ENCODE measurements at regions of chr14 and their contacts with region 1.

Region 1: GRCh38 chr14:29548948-29549370 is 378.7 kb downstream of the PRKD1 start:
- DNase-seq: peak; percentile 24
- ATAC-seq: peak; percentile 80
- H3K4me3 ChIP-seq: no peak overlapping the region
- H3K27ac ChIP-seq: no peak overlapping the region
- H3K4me1 ChIP-seq: no peaks in the 10 kb centered on the region
- H3K27me3 ChIP-seq: no peaks in the 10 kb centered on the region
- CTCF ChIP-seq: peak; percentile 57; the same call in 1 of the 2 replicates

Region 2: DNA sequence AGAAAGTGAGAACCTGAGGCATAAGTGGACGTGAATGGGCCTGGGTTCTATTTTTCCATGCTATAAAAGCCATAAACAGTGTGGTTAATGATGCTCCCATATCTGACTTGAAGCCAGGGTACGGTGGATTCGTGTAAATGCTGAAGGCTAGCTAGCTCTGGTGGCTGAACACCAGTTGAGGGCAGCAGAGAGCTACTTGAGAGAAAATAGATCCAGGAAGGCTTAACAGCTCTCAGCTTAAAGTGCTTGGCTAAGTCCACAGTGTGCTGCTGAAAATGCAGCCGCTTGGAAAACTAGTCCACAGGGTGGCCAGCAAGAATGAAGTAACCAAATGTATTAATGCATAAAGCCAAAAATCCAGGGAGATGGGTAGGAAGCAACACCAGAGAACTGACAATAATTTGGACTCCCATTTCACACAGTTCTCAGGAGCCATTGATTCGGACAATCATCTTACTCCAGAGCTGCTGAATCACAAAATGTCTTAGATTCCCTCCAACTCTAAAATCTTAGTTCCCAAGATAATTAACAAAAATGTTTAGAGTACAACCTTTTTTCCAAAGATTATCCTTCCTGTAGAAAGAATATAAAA is 797.4 kb before region 1 on chr14:
- CTCF ChIA-PET with region 1: no interaction called
- POLR2A ChIA-PET with region 1: no interaction called
- in situ Hi-C with region 1: loop called (anchors 25 kb)
- intact Hi-C with region 1: no loop called
- DNase-seq: peak; percentile 43
- ATAC-seq: peak; percentile 86
- H3K4me3 ChIP-seq: no peak overlapping the region
- H3K27ac ChIP-seq: no peak overlapping the region
- H3K4me1 ChIP-seq: no peaks in the 10 kb centered on the region
- H3K27me3 ChIP-seq: peaks cover 5% of the 10 kb centered on the region
- CTCF ChIP-seq: peak; percentile 80

Region 3: GRCh38 chr14:29376237-29376636 is 172.7 kb before region 1 on chr14:
- CTCF ChIA-PET with region 1: no interaction called
- POLR2A ChIA-PET with region 1: no interaction called
- in situ Hi-C with region 1: no loop called
- intact Hi-C with region 1: no loop called
- DNase-seq: no peak
- ATAC-seq: no peak
- H3K4me3 ChIP-seq: no peak overlapping the region
- H3K27ac ChIP-seq: no peak overlapping the region
- H3K4me1 ChIP-seq: no peaks in the 10 kb centered on the region
- H3K27me3 ChIP-seq: no peaks in the 10 kb centered on the region
- CTCF ChIP-seq: no peak

Region 4: GRCh38 chr14:29716150-29716549 is 167.2 kb after region 1 on chr14:
- CTCF ChIA-PET with region 1: no interaction called
- POLR2A ChIA-PET with region 1: interaction called, 13 read pairs
- in situ Hi-C with region 1: no loop called
- intact Hi-C with region 1: no loop called
- DNase-seq: no peak
- ATAC-seq: no peak
- H3K4me3 ChIP-seq: no peak overlapping the region
- H3K27ac ChIP-seq: no peak overlapping the region
- H3K4me1 ChIP-seq: no peaks in the 10 kb centered on the region
- H3K27me3 ChIP-seq: no peaks in the 10 kb centered on the region
- CTCF ChIP-seq: no peak

Region 5: GRCh38 chr14:30005114-30005808 is 456.3 kb after region 1 on chr14:
- CTCF ChIA-PET with region 1: interaction called, 3 read pairs
- POLR2A ChIA-PET with region 1: no interaction called
- in situ Hi-C with region 1: no loop called
- intact Hi-C with region 1: loop called (anchors 1 kb)
- DNase-seq: peak; percentile 15
- ATAC-seq: no peak
- H3K4me3 ChIP-seq: no peak overlapping the region
- H3K27ac ChIP-seq: no peak overlapping the region
- H3K4me1 ChIP-seq: no peaks in the 10 kb centered on the region
- H3K27me3 ChIP-seq: no peaks in the 10 kb centered on the region
- CTCF ChIP-seq: peak; percentile 66; the same call in 1 of the 2 replicates

Region 6: GRCh38 chr14:30214461-30215090 is 665.6 kb after region 1 on chr14:
- CTCF ChIA-PET with region 1: no interaction called
- POLR2A ChIA-PET with region 1: no interaction called
- in situ Hi-C with region 1: no loop called
- intact Hi-C with region 1: loop called (anchors 2 kb)
- DNase-seq: no peak
- ATAC-seq: peak; percentile 69; the same call in 1 of the 2 replicates
- H3K4me3 ChIP-seq: no peak overlapping the region
- H3K27ac ChIP-seq: no peak overlapping the region
- H3K4me1 ChIP-seq: no peaks in the 10 kb centered on the region
- H3K27me3 ChIP-seq: no peaks in the 10 kb centered on the region
- CTCF ChIP-seq: peak; percentile 54

Region 7: GRCh38 chr14:30443368-30444007 is 894.5 kb after region 1 on chr14:
- CTCF ChIA-PET with region 1: no interaction called
- POLR2A ChIA-PET with region 1: no interaction called
- in situ Hi-C with region 1: no loop called
- intact Hi-C with region 1: loop called (anchors 10 kb)
- DNase-seq: peak; percentile 10
- ATAC-seq: no peak
- H3K4me3 ChIP-seq: no peak overlapping the region
- H3K27ac ChIP-seq: no peak overlapping the region
- H3K4me1 ChIP-seq: no peaks in the 10 kb centered on the region
- H3K27me3 ChIP-seq: no peaks in the 10 kb centered on the region
- CTCF ChIP-seq: peak; percentile 50; the same call in 1 of the 2 replicates